B cell (primary cell): ENCODE measurements at regions of chr1 and their contacts with region 1.

Region 1: DNA sequence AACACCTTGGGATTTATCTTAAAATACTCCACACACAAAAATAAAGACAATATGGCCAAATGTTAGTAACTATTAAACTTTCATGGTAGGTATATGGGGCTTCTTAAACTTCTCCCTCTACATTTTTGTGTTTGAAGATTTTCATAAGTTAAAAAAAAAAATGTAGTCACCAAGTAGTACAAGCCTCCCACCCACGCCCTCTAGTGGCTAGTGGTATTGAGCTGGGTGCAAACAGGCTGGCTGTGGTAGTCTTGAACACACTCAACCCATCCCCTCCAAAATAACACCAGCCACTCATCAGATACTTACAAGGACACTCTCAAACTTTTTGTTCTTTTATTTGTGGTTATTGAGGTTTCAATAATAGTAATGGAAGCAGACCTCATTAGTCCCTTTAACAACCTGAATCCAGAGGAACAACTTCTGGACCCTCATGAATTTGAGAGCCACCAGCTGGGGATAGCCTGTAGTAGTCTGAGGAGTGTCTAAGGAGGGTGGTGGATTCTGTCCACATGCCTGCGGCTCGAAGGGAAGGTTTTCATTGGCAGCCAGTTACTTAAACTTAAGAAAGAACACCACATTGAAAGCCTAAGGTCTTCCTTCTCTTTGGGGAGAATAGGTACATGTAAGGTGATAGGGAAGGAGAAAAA is 15.6 kb downstream of the RD3 start:
- DNase-seq: peak; percentile 78
- ATAC-seq: peak; percentile 63
- H3K4me3 ChIP-seq: no peak overlapping the region
- H3K4me3 Mint-ChIP-seq: no peak overlapping the region
- H3K27ac ChIP-seq: no peak overlapping the region
- H3K27ac Mint-ChIP-seq: no peak overlapping the region
- H3K4me1 ChIP-seq: no peaks in the 10 kb centered on the region
- H3K4me1 Mint-ChIP-seq: peaks cover 2% of the 10 kb centered on the region
- H3K27me3 ChIP-seq: peaks cover 0 to 26% (median 1%) of the 10 kb centered on the region in 4 experiments
- H3K27me3 Mint-ChIP-seq: peaks cover 30% of the 10 kb centered on the region
- CTCF ChIP-seq: peak; percentile 96

Region 2: GRCh38 chr1:210407207-210407886 is 1069.0 kb before region 1 on chr1:
- CTCF ChIA-PET with region 1: no interaction called
- POLR2A ChIA-PET with region 1: no interaction called
- intact Hi-C with region 1: loop called (anchors 2 kb)
- DNase-seq: peak; percentile 72
- ATAC-seq: peak; percentile 60
- H3K4me3 ChIP-seq: no peak overlapping the region
- H3K4me3 Mint-ChIP-seq: no peak overlapping the region
- H3K27ac ChIP-seq: no peak overlapping the region
- H3K27ac Mint-ChIP-seq: no peak overlapping the region
- H3K4me1 ChIP-seq: no peaks in the 10 kb centered on the region
- H3K4me1 Mint-ChIP-seq: peaks cover 2% of the 10 kb centered on the region
- H3K27me3 ChIP-seq: no peaks in the 10 kb centered on the region
- H3K27me3 Mint-ChIP-seq: no peaks in the 10 kb centered on the region
- CTCF ChIP-seq: peak; percentile 99

Region 3: DNA sequence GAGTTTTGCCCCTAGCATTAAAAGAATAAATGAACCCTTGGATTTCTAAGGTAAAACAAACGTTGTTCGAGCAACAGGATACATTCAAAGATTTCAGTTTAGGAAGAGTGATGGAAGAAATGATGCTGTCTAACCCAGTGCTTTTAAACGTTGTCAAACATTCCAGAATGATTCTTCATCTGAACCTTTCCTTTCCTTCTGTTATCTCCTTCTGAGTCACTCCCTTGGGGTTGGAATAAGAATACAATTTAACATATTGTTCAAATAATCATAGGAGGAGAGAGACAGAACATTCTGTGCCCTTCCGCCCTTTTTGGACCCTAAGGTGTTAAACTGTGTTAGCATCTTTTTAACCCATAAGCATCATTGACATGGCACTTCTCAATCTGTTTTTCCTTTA is 278.2 kb before region 1 on chr1:
- CTCF ChIA-PET with region 1: no interaction called
- POLR2A ChIA-PET with region 1: no interaction called
- intact Hi-C with region 1: no loop called
- DNase-seq: no peak
- ATAC-seq: no peak
- H3K4me3 ChIP-seq: no peak overlapping the region
- H3K4me3 Mint-ChIP-seq: no peak overlapping the region
- H3K27ac ChIP-seq: no peak overlapping the region
- H3K27ac Mint-ChIP-seq: no peak overlapping the region
- H3K4me1 ChIP-seq: no peaks in the 10 kb centered on the region
- H3K4me1 Mint-ChIP-seq: no peaks in the 10 kb centered on the region
- H3K27me3 ChIP-seq: peaks cover 0 to 5% (median 1%) of the 10 kb centered on the region in 4 experiments
- H3K27me3 Mint-ChIP-seq: peaks cover 35% of the 10 kb centered on the region
- CTCF ChIP-seq: no peak

Region 4: DNA sequence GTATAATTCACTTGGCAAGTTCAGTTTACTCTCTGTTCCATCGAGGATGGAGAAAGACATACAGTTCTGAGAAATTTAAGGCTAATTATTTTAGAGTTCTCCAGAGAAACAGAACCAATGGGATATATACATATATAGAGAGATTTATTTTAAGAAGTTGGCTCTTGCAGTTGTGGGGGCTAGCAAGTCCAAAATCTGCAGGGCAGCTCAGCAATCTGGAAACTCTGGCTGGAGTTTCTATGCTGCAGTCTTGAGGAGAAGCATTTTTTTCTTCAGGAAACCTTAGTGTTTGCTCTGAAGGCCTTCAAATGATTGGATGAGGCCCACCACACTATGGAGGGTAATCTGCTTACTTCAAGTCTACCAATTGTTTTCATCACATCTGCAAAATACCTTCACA is 115.1 kb before region 1 on chr1:
- CTCF ChIA-PET with region 1: no interaction called
- POLR2A ChIA-PET with region 1: no interaction called
- intact Hi-C with region 1: no loop called
- DNase-seq: no peak
- ATAC-seq: no peak
- H3K4me3 ChIP-seq: no peak overlapping the region
- H3K4me3 Mint-ChIP-seq: no peak overlapping the region
- H3K27ac ChIP-seq: peak overlapping the region in 1 of 2 donors; percentile 39
- H3K27ac Mint-ChIP-seq: no peak overlapping the region
- H3K4me1 ChIP-seq: no peaks in the 10 kb centered on the region
- H3K4me1 Mint-ChIP-seq: peaks cover 5% of the 10 kb centered on the region
- H3K27me3 ChIP-seq: no peaks in the 10 kb centered on the region
- H3K27me3 Mint-ChIP-seq: no peaks in the 10 kb centered on the region
- CTCF ChIP-seq: no peak

Region 5: DNA sequence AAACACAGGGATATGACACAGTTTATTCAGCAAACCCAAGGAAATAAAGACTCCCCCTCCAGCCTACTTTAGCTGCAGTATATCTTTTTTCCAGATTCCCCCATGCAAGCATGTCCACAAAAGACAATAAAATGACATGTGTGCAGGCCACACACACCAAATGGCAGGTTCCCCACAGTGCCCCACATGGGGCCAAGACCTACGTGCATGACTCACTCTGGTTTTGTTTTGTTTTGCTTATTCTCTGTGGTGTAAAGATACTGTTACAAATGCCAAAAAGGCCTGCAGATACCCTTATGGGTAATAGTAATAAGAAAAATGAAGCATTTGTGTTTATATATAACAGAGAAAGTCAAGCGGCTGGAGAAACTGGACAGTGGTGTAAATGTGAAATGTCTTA is 55.9 kb before region 1 on chr1:
- CTCF ChIA-PET with region 1: interaction called, 3 read pairs
- POLR2A ChIA-PET with region 1: no interaction called
- intact Hi-C with region 1: loop called (anchors 10 kb)
- DNase-seq: no peak
- ATAC-seq: no peak
- H3K4me3 ChIP-seq: no peak overlapping the region
- H3K4me3 Mint-ChIP-seq: no peak overlapping the region
- H3K27ac ChIP-seq: no peak overlapping the region
- H3K27ac Mint-ChIP-seq: no peak overlapping the region
- H3K4me1 ChIP-seq: no peaks in the 10 kb centered on the region
- H3K4me1 Mint-ChIP-seq: peaks cover 8% of the 10 kb centered on the region
- H3K27me3 ChIP-seq: no peaks in the 10 kb centered on the region
- H3K27me3 Mint-ChIP-seq: no peaks in the 10 kb centered on the region
- CTCF ChIP-seq: no peak

Region 6: GRCh38 chr1:211495584-211495983 is 19.3 kb after region 1 on chr1:
- CTCF ChIA-PET with region 1: no interaction called
- POLR2A ChIA-PET with region 1: no interaction called
- intact Hi-C with region 1: no loop called
- DNase-seq: no peak
- ATAC-seq: no peak
- H3K4me3 ChIP-seq: no peak overlapping the region
- H3K4me3 Mint-ChIP-seq: no peak overlapping the region
- H3K27ac ChIP-seq: no peak overlapping the region
- H3K27ac Mint-ChIP-seq: no peak overlapping the region
- H3K4me1 ChIP-seq: no peaks in the 10 kb centered on the region
- H3K4me1 Mint-ChIP-seq: no peaks in the 10 kb centered on the region
- H3K27me3 ChIP-seq: peaks cover 0 to 9% (median 0%) of the 10 kb centered on the region in 4 experiments
- H3K27me3 Mint-ChIP-seq: peaks cover 19% of the 10 kb centered on the region
- CTCF ChIP-seq: no peak